ENCODE measurements at regions of chr7 and their contacts with region 1.

Region 1: DNA sequence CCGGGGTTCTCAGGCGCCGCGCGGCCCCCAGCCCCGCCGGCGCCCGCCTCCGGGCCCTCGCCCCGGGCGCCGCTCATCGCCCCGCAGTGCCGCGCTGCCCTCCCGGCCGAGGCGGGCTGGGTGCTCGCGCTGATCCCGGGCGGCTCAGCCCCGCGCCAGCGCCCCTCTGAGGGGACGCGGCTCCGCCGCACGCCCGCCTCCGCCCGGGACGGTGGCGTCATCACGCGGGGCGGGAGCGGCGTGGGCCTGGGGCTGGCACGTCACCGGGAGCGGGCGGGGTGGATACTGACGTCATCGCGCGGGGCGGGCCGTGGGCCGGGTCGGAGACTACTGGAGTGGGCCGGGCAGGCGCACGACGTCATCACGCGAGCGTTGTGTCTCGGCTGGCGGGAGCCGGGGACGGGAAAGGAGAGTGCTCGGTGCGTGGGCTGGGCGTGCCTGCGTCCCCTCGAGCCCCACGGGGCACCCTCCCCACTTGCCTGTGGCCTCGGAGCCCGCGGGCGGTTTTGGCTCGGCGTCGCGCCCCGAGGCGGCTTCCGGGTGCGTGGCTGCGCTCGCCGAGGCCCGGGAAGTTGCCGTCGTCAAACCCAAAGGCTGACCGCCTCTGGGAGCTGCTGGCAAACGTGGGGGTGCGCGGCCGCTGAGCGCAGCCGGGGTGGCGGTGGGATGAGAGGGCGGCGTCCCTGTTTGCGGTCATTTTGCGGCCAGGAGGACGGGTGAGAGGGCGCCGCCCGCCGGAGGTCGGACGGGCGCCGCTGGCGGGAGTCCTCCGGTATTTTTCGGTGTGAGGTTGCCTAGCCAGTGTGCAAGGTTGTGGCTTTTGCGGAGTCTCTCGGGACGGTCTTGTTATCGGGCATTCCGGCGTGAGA is at the start of gene ESYT2:
- DNase-seq: peak; percentile 99 to 100
- ATAC-seq: peak; percentile 96
- H3K4me3 ChIP-seq: peak within 1 kb of the TSS; percentile 94 to 97
- H3K27ac ChIP-seq: peak within 1 kb of the TSS; percentile 93 to 98
- H3K4me1 ChIP-seq: no peaks in the 10 kb centered on the region
- H3K27me3 ChIP-seq: no peaks in the 10 kb centered on the region
- total RNA-seq, gene ESYT2: 146 to 172 TPM

Region 2: DNA sequence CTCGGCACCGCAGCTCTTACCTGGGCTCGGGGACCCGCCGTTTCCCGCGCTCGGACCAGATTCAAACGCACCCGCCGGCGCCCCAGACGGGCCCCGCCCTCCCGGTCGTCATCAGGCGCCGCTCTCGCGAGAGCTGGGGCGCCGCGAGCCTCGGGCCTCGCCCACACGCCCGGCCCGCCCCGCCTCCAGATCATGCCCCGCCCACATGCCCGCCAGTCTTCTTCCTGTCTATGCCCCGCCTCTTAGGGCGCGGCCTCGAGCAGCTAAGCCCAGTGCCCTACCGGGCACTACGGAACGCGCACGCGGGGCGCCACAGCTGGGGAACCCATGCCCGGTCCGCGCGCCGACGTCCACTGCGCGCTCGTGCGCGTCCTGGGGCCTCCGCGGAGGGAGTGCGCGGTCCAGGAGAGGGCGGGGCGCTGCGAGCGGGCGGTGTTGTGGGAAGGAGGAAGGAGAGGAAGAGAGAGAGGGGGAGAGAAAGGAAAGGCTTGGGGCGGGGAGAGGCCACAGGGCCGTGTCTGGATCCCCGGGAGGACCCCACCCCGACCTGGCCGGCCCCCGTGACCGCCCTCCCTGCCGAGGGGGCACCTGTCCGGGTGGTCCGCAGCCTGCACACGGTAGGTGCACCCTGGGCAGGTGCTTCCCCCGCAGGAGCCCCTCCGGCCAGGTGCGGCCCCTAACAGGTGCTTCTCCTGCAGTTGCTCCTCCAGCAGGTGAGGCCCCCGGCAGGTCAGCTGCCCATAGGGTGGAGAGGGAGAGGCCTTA is 124.7 kb before region 1 on chr7 and contains the start of gene NCAPG2:
- intact Hi-C with region 1: loop called in 1 of 2 experiments (anchors 1 kb)
- DNase-seq: peak; percentile 99 to 100
- ATAC-seq: peak; percentile 100
- H3K4me3 ChIP-seq: peak within 1 kb of the TSS; percentile 51 to 78
- H3K27ac ChIP-seq: peak within 1 kb of the TSS in 1 of 2 donors; percentile 11
- H3K4me1 ChIP-seq: no peaks in the 10 kb centered on the region
- H3K27me3 ChIP-seq: no peaks in the 10 kb centered on the region
- total RNA-seq, gene NCAPG2: 6.6 to 9.2 TPM

Region 3: GRCh38 chr7:158782761-158783401 is 46.7 kb before region 1 on chr7:
- intact Hi-C with region 1: loop called (anchors 2 kb)
- DNase-seq: peak; percentile 85 to 89
- ATAC-seq: peak; percentile 91
- H3K4me3 ChIP-seq: no peak overlapping the region
- H3K27ac ChIP-seq: peak overlapping the region; percentile 63 to 93
- H3K4me1 ChIP-seq: peaks cover 0 to 5% of the 10 kb centered on the region in 2 donors
- H3K27me3 ChIP-seq: no peaks in the 10 kb centered on the region

Region 4: GRCh38 chr7:158856883-158857668 is 27.5 kb after region 1 on chr7:
- intact Hi-C with region 1: loop called (anchors 1 to 5 kb)
- DNase-seq: no peak
- ATAC-seq: peak; percentile 42
- H3K4me3 ChIP-seq: peak overlapping the region; percentile 15 to 72
- H3K27ac ChIP-seq: peak overlapping the region in 1 of 2 donors; percentile 36
- H3K4me1 ChIP-seq: no peaks in the 10 kb centered on the region
- H3K27me3 ChIP-seq: no peaks in the 10 kb centered on the region

Region 5: GRCh38 chr7:158863611-158864506 is 34.3 kb after region 1 on chr7:
- intact Hi-C with region 1: loop called in 1 of 2 experiments (anchors 5 kb)
- DNase-seq: peak; percentile 86
- ATAC-seq: peak; percentile 87
- H3K4me3 ChIP-seq: peak overlapping the region; percentile 47 to 50
- H3K27ac ChIP-seq: peak overlapping the region in 1 of 2 donors; percentile 51
- H3K4me1 ChIP-seq: no peaks in the 10 kb centered on the region
- H3K27me3 ChIP-seq: no peaks in the 10 kb centered on the region

Measured in aorta (tissue), 5 donors.